Endothelial cell of umbilical vein (primary cell): ENCODE measurements at regions of chr13 and their contacts with region 1.

Region 1: DNA sequence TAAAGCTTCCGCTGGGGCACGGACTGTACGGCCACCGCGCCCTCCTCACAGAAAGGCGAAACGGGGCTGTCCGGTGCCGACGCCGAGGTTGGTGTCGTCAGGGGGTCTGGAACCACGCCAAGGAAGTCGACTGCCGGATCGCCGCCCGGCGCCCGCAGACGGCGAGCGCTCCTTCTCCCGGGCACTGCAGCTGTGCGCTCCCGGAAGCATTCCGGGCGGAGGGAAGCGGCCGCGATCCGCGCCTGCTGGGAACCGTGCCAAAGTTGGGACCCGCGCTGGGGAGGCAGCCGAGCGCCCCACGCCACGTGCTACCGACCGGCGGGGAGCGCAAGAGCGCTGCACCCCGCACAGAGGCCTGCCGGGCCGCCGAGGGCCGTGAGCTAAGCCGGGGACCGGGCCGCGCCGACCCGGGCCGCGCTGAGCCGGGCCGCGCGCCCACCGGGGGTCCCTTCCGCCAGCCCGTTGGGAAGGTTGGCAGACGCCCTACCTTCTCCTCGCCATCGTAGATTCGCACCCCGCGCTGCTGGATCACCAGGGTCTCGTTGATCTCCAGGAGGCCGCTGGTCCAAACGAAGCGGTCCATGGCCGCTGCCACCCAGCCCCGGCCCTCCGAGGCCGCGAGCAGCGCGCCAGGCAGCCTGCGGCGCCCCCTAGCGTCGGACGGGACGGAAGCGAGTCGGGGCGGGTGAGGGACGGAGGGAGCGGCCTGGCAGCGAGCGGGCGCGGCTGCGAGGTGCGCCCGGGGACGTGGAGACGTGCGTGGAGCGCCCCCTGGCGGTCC is at the start of gene VPS36:
- DNase-seq: peak; percentile 93
- H3K4me3 ChIP-seq: peak within 1 kb of the TSS; percentile 74 to 99 (median 98)
- H3K27ac ChIP-seq: peak within 1 kb of the TSS; percentile 94
- H3K4me1 ChIP-seq: peaks cover 27% of the 10 kb centered on the region
- H3K27me3 ChIP-seq: no peaks in the 10 kb centered on the region
- CTCF ChIP-seq: peak; percentile 95 to 100
- POLR2A ChIP-seq: peak; percentile 61
- total RNA-seq, gene VPS36: 30.4 and 32.3 TPM in 2 replicates

Region 2: DNA sequence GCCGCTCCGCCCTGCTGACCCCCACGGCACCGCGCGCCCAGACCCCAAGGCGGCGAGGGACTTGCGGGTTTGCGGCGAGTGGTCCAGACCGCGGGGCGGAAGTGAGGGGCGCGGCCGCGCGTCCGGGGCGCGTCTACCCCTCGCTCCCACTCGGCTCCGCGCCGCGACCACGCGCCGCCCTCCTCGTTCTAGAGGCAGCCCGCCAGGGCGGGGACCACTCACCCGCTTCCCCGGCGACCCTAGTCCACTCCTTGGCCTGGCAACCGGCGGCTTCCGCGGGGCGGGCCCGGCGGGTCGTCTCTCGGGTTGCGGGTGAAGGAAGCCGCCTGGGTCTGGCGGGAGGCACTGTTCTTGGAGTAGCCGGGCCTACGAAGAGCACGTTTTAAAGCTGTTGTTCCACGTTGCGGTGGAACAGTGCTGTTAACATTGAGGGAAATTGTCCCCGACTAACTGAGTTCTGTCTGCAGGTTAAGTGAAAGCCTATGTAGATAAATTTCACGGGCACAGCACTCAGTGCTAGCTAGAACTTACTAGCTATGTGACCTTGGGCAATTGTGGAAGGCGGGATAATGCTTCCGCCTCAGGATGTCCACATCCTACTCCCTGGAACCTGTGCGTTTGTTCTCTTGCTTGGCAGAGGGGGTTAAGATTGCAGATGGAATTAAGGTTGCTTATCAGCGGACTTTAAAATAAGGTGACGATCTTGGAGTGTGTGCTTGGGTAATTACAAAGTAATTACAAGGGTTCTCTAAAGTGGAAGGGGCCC is 290.7 kb before region 1 on chr13 and contains the start of gene NEK3:
- CTCF ChIA-PET with region 1: interaction called, 6 read pairs
- POLR2A ChIA-PET with region 1: no interaction called
- dilution Hi-C with region 1: no loop called
- intact Hi-C with region 1: loop called (anchors 10 kb)
- DNase-seq: peak; percentile 71
- H3K4me3 ChIP-seq: peak within 1 kb of the TSS; percentile 81 to 92 (median 90)
- H3K27ac ChIP-seq: peak within 1 kb of the TSS; percentile 46
- H3K4me1 ChIP-seq: peaks cover 52% of the 10 kb centered on the region
- H3K27me3 ChIP-seq: no peaks in the 10 kb centered on the region
- CTCF ChIP-seq: no peak
- POLR2A ChIP-seq: no peak
- total RNA-seq, gene NEK3: 13.8 and 23.5 TPM in 2 replicates

Region 3: GRCh38 chr13:52371736-52372247 is 78.4 kb before region 1 on chr13:
- CTCF ChIA-PET with region 1: interaction called, 43 read pairs
- POLR2A ChIA-PET with region 1: interaction called, 4 read pairs
- dilution Hi-C with region 1: no loop called
- intact Hi-C with region 1: no loop called
- DNase-seq: peak; percentile 76
- H3K4me3 ChIP-seq: no peak overlapping the region
- H3K27ac ChIP-seq: no peak overlapping the region
- H3K4me1 ChIP-seq: peaks cover 34% of the 10 kb centered on the region
- H3K27me3 ChIP-seq: no peaks in the 10 kb centered on the region
- CTCF ChIP-seq: no peak
- POLR2A ChIP-seq: no peak

Region 4: DNA sequence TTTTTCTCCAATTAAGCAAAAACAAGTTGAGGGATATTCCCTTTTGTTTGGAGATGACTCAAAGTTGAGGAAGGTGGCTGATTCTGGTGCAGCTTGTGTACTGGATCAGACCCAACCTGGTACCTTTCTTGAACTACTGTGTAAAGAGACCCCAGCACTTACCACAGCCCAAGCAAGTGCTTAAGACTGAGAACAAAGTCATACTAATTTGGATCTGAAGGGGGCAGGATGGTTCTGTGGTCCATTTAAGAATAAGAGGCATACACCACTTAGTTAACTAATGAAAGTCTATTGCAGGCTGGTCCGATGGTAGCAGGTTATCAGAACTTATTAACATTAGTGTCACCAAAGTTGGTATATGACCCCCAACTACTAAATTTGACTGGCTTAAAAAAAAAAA is 50.5 kb before region 1 on chr13:
- CTCF ChIA-PET with region 1: interaction called, 142 read pairs
- POLR2A ChIA-PET with region 1: interaction called, 16 read pairs
- dilution Hi-C with region 1: no loop called
- intact Hi-C with region 1: loop called (anchors 1 kb)
- DNase-seq: peak; percentile 69
- H3K4me3 ChIP-seq: no peak overlapping the region
- H3K27ac ChIP-seq: no peak overlapping the region
- H3K4me1 ChIP-seq: peaks cover 10% of the 10 kb centered on the region
- H3K27me3 ChIP-seq: no peaks in the 10 kb centered on the region
- CTCF ChIP-seq: peak in 1 of 2 donors; percentile 24
- POLR2A ChIP-seq: no peak

Region 5: GRCh38 chr13:52428295-52428694 is 21.9 kb before region 1 on chr13:
- CTCF ChIA-PET with region 1: interaction called, 101 read pairs
- POLR2A ChIA-PET with region 1: interaction called, 8 read pairs
- dilution Hi-C with region 1: no loop called
- intact Hi-C with region 1: loop called (anchors 1 kb)
- DNase-seq: peak; percentile 97
- H3K4me3 ChIP-seq: no peak overlapping the region
- H3K27ac ChIP-seq: peak overlapping the region; percentile 96
- H3K4me1 ChIP-seq: peaks cover 40% of the 10 kb centered on the region
- H3K27me3 ChIP-seq: no peaks in the 10 kb centered on the region
- CTCF ChIP-seq: no peak
- POLR2A ChIP-seq: peak; percentile 81

Region 6: DNA sequence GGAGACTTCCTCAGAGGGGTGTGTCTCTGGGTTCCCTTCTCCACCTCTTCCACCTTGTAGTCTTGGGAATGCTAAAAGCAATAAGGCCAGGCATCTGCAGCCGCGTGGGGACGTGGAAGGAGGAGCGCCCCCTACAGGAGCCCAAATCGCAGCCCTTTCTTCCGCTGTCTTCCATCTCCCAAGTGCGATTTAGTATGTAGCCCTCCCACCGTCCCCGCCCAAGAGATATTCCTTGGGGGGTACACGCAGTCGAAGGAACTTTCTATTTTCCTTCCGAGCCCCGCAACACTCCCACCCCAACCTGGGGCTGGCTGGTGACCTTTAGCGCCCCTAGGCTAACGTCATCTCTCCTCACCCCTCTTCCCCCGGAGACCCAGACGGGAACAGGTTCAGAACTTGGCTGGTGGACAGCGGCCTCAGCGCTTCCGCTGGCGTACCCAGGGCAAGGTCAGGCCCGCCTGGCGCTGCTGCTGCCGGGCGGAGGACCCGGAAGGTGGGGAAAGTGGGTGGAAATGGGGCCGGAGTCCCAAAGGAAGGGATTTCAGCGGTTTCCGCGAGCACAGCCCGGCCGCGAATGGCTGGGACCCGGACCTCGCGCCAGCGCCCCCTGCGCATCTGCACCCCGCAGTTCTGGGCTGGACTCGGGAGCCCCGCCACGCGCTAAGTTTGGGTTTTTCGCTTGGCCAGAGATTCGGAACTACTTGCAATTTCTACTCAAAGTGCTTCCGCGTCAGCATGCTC is 400.4 kb after region 1 on chr13:
- CTCF ChIA-PET with region 1: no interaction called
- POLR2A ChIA-PET with region 1: no interaction called
- dilution Hi-C with region 1: no loop called
- intact Hi-C with region 1: loop called (anchors 1 kb)
- DNase-seq: peak; percentile 20
- H3K4me3 ChIP-seq: peak overlapping the region; percentile 42 to 56 (median 45)
- H3K27ac ChIP-seq: no peak overlapping the region
- H3K4me1 ChIP-seq: peaks cover 5% of the 10 kb centered on the region
- H3K27me3 ChIP-seq: peaks cover 48 to 70% of the 10 kb centered on the region in 2 experiments
- CTCF ChIP-seq: no peak
- POLR2A ChIP-seq: no peak

Region 7: DNA sequence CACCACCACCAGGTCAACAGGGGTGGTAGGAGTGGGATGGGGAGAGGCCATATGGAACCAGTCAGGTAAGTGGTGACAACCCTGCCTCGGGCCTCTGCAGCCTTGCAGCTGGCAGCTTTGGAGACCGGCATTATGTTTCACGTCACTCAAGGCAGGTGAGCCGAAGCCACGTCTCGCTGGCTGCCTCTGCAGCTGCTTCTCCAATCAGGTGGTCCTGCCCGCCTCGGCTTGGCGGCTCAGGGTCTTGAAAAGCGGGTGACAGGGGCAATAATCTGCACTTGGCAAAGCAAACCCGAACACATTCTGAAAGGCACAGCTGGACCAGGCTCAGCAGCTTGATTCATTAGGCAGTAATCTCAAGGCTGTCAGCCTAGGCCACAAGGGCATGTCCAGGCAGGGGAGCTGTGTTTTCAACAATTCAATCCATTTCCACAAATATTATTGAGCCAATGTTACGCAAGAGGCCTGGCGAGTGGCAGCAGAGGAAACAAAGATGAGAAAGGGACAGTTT is 475.6 kb after region 1 on chr13:
- CTCF ChIA-PET with region 1: no interaction called
- POLR2A ChIA-PET with region 1: no interaction called
- dilution Hi-C with region 1: no loop called
- intact Hi-C with region 1: no loop called
- DNase-seq: no peak
- H3K4me3 ChIP-seq: no peak overlapping the region
- H3K27ac ChIP-seq: no peak overlapping the region
- H3K4me1 ChIP-seq: no peaks in the 10 kb centered on the region
- H3K27me3 ChIP-seq: no peaks in the 10 kb centered on the region
- CTCF ChIP-seq: no peak
- POLR2A ChIP-seq: no peak